Mammary epithelial cell (primary cell): ENCODE measurements at regions of chr4 and their contacts with region 1.

Region 1: GRCh38 chr4:57184378-57185029 is 74.3 kb upstream of the IGFBP7 start:
- DNase-seq: no peak
- H3K4me3 ChIP-seq: no peak overlapping the region
- H3K27ac ChIP-seq: no peak overlapping the region
- H3K4me1 ChIP-seq: peaks cover 15% of the 10 kb centered on the region
- H3K27me3 ChIP-seq: no peaks in the 10 kb centered on the region
- CTCF ChIP-seq: no peak

Region 2: GRCh38 chr4:57303012-57303751 is 118.7 kb after region 1 on chr4:
- CTCF ChIA-PET with region 1: no interaction called
- dilution Hi-C with region 1: no loop called
- in situ Hi-C with region 1: no loop called
- intact Hi-C with region 1: loop called (anchors 5 kb)
- DNase-seq: peak; percentile 56
- H3K4me3 ChIP-seq: no peak overlapping the region
- H3K27ac ChIP-seq: no peak overlapping the region
- H3K4me1 ChIP-seq: no peaks in the 10 kb centered on the region
- H3K27me3 ChIP-seq: peaks cover 3% of the 10 kb centered on the region
- CTCF ChIP-seq: peak in 1 of 2 donors; percentile 31

Region 3: DNA sequence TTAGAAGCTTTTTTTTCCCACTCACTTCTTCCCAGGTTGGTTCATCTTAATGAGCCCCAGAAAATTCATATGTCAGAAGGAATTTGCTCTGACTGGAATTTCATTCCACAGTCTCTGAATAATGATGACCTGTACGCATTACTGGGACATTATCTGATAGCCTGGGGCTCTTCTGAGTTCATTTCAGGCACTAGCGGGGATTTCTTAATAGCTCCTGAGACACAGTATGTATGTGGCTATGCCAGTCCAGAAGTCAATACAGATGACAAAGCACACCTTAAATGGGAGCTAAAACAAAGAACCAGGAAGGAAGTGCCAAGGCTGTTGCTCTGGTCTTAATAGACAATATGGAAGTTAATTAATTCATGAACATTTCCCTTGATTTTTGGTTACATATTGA is 220.9 kb after region 1 on chr4:
- CTCF ChIA-PET with region 1: no interaction called
- dilution Hi-C with region 1: no loop called
- in situ Hi-C with region 1: no loop called
- intact Hi-C with region 1: loop called (anchors 2 kb)
- DNase-seq: peak; percentile 90
- H3K4me3 ChIP-seq: no peak overlapping the region
- H3K27ac ChIP-seq: peak overlapping the region; percentile 69
- H3K4me1 ChIP-seq: peaks cover 27% of the 10 kb centered on the region
- H3K27me3 ChIP-seq: no peaks in the 10 kb centered on the region
- CTCF ChIP-seq: no peak

Region 4: GRCh38 chr4:57426779-57427395 is 242.4 kb after region 1 on chr4:
- CTCF ChIA-PET with region 1: no interaction called
- dilution Hi-C with region 1: no loop called
- in situ Hi-C with region 1: no loop called
- intact Hi-C with region 1: loop called (anchors 2 kb)
- DNase-seq: peak; percentile 61
- H3K4me3 ChIP-seq: no peak overlapping the region
- H3K27ac ChIP-seq: no peak overlapping the region
- H3K4me1 ChIP-seq: peaks cover 30% of the 10 kb centered on the region
- H3K27me3 ChIP-seq: no peaks in the 10 kb centered on the region
- CTCF ChIP-seq: peak; percentile 66 to 85